HepG2 (cell line): ENCODE measurements at regions of chr5 and their contacts with region 1.

Region 1: GRCh38 chr5:115069087-115069968 is 100.4 kb downstream of the TRIM36 start:
- DNase-seq: peak; percentile 64
- ATAC-seq: peak; percentile 81
- H3K4me3 ChIP-seq: peak overlapping the region; percentile 50 to 67 (median 54); a peak in 4 of 6 replicates
- H3K27ac ChIP-seq: no peak overlapping the region
- H3K4me1 ChIP-seq: peaks cover 11% of the 10 kb centered on the region
- H3K27me3 ChIP-seq: no peaks in the 10 kb centered on the region
- CTCF ChIP-seq: peak; percentile 83
- EP300 ChIP-seq: no peak
- POLR2A ChIP-seq: no peak
- RAD21 ChIP-seq: 0 out of 2 replicates have a peak, but pooled peaks have one; percentile 55

Region 2: GRCh38 chr5:113612060-113612496 is 1457.2 kb before region 1 on chr5:
- CTCF ChIA-PET with region 1: no interaction called
- POLR2A ChIA-PET with region 1: no interaction called
- in situ Hi-C with region 1: loop called (anchors 25 kb)
- intact Hi-C with region 1: loop called (anchors 2 kb)
- DNase-seq: peak; percentile 7
- ATAC-seq: peak; percentile 66
- H3K4me3 ChIP-seq: no peak overlapping the region
- H3K27ac ChIP-seq: no peak overlapping the region
- H3K4me1 ChIP-seq: no peaks in the 10 kb centered on the region
- H3K27me3 ChIP-seq: 0 out of 5 replicates have a peak, but pooled peaks cover 0 to 2% of the 10 kb centered on the region in 2 experiments
- CTCF ChIP-seq: peak; percentile 70
- EP300 ChIP-seq: no peak
- POLR2A ChIP-seq: no peak
- RAD21 ChIP-seq: no peak

Region 3: GRCh38 chr5:114449860-114450421 is 619.4 kb before region 1 on chr5:
- CTCF ChIA-PET with region 1: no interaction called
- POLR2A ChIA-PET with region 1: no interaction called
- in situ Hi-C with region 1: no loop called
- intact Hi-C with region 1: loop called (anchors 5 kb)
- DNase-seq: peak; percentile 25
- ATAC-seq: peak; percentile 100
- H3K4me3 ChIP-seq: no peak overlapping the region
- H3K27ac ChIP-seq: no peak overlapping the region
- H3K4me1 ChIP-seq: no peaks in the 10 kb centered on the region
- H3K27me3 ChIP-seq: peaks cover 0 to 5% of the 10 kb centered on the region in 2 experiments; a peak in 1 of 5 replicates
- CTCF ChIP-seq: peak; percentile 89
- EP300 ChIP-seq: no peak
- POLR2A ChIP-seq: no peak
- RAD21 ChIP-seq: peak; percentile 73

Region 4: GRCh38 chr5:114803353-114803752 is 266.0 kb before region 1 on chr5:
- CTCF ChIA-PET with region 1: interaction called, 4 read pairs
- POLR2A ChIA-PET with region 1: no interaction called
- in situ Hi-C with region 1: loop called (anchors 25 kb)
- intact Hi-C with region 1: loop called (anchors 1 kb)
- DNase-seq: no peak
- ATAC-seq: peak; percentile 51; the same call in 2 of the 3 replicates
- H3K4me3 ChIP-seq: no peak overlapping the region
- H3K27ac ChIP-seq: no peak overlapping the region
- H3K4me1 ChIP-seq: no peaks in the 10 kb centered on the region
- H3K27me3 ChIP-seq: no peaks in the 10 kb centered on the region; a peak in 1 of 5 replicates
- CTCF ChIP-seq: no peak
- EP300 ChIP-seq: no peak
- POLR2A ChIP-seq: no peak
- RAD21 ChIP-seq: no peak

Region 5: GRCh38 chr5:115054387-115054951 is 14.9 kb before region 1 on chr5:
- CTCF ChIA-PET with region 1: no interaction called
- POLR2A ChIA-PET with region 1: interaction called, 26 read pairs
- in situ Hi-C with region 1: no loop called
- intact Hi-C with region 1: no loop called
- DNase-seq: peak; percentile 71
- ATAC-seq: peak; percentile 87
- H3K4me3 ChIP-seq: no peak overlapping the region
- H3K27ac ChIP-seq: no peak overlapping the region
- H3K4me1 ChIP-seq: peaks cover 23% of the 10 kb centered on the region
- H3K27me3 ChIP-seq: no peaks in the 10 kb centered on the region; a peak in 1 of 5 replicates
- CTCF ChIP-seq: no peak
- EP300 ChIP-seq: peak in 1 of 2 experiments; percentile 58; a peak in 1 of 4 replicates
- POLR2A ChIP-seq: no peak
- RAD21 ChIP-seq: no peak